ENCODE measurements at regions of chr14 and their contacts with region 1.

Region 1: DNA sequence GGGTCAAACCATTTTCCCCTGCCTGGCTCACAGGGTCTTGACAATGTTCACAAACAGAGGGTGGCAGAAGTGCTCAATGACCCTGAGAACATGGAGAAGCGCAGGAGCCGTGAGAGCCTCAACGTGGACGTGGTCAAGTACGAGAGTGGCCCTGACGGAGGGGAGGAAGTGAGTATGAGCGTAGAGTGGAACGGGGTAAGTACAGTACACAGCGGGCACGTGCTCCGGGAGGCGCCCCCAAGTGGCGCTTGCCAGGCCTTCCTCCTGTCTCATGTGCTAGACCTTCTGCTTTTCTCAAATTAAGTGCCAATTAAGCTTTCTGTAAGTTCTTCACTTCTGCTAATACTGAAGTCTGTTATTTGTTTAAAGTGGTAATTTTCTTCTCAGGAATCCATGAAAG is 35.9 kb downstream of the XRCC3 start:
- DNase-seq: peak; percentile 57 to 77 (median 77)
- H3K4me3 ChIP-seq: no peak overlapping the region
- H3K27ac ChIP-seq: no peak overlapping the region
- H3K4me1 ChIP-seq: peaks cover 0 to 4% (median 0%) of the 10 kb centered on the region in 4 experiments
- H3K27me3 ChIP-seq: no peaks in the 10 kb centered on the region

Region 2: GRCh38 chr14:103562429-103563225 is 116.7 kb before region 1 on chr14 and contains the starts of genes BAG5 and COA8:
- CTCF ChIA-PET with region 1: interaction called, 10 read pairs
- POLR2A ChIA-PET with region 1: interaction called, 3 read pairs
- DNase-seq: peak; percentile 88 to 95 (median 93)
- H3K4me3 ChIP-seq: peak within 1 kb of the TSS; percentile 66 to 99 (median 94)
- H3K27ac ChIP-seq: peak within 1 kb of the TSS; percentile 78 to 93
- H3K4me1 ChIP-seq: peaks cover 11 to 30% (median 25%) of the 10 kb centered on the region in 4 experiments
- H3K27me3 ChIP-seq: no peaks in the 10 kb centered on the region

Region 3: GRCh38 chr14:103576371-103577024 is 102.9 kb before region 1 on chr14:
- CTCF ChIA-PET with region 1: interaction called, 13 read pairs
- POLR2A ChIA-PET with region 1: no interaction called
- DNase-seq: no peak
- H3K4me3 ChIP-seq: no peak overlapping the region
- H3K27ac ChIP-seq: no peak overlapping the region
- H3K4me1 ChIP-seq: no peaks in the 10 kb centered on the region
- H3K27me3 ChIP-seq: no peaks in the 10 kb centered on the region

Region 4: DNA sequence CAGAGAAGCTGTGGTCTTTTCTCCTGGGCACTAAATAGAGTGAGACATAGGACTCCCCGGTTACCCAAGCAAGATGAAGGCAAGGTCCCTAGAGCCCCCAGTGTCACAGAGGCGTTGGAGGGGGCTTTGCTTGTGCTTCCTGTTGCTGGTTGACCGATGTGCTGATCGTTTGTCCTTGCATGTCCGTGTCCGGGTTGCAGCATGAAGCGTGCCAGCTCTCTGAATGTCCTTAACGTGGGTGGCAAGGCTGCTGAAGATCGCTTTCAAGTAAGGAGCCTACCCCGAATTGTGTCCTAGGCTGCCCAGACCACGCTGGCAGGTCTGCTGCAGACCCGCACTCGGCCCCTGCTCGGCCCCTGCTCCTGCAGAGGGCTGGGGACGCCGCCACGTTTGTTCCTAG is 12.8 kb after region 1 on chr14:
- CTCF ChIA-PET with region 1: interaction called, 11 read pairs
- POLR2A ChIA-PET with region 1: no interaction called
- DNase-seq: no peak
- H3K4me3 ChIP-seq: no peak overlapping the region
- H3K27ac ChIP-seq: no peak overlapping the region
- H3K4me1 ChIP-seq: peaks cover 0 to 19% (median 8%) of the 10 kb centered on the region in 4 experiments
- H3K27me3 ChIP-seq: no peaks in the 10 kb centered on the region

Measured in common myeloid progenitor, CD34-positive (primary cell).